Uterus (tissue), 4 donors: ENCODE measurements at regions of chr7 and their contacts with region 1.

Region 1: GRCh38 chr7:130896898-130897514 is 163.0 kb upstream of the KLF14 start:
- DNase-seq: peak; percentile 70 to 83
- H3K4me3 ChIP-seq: no peak overlapping the region
- H3K27ac ChIP-seq: peak overlapping the region; percentile 81 to 86
- H3K4me1 ChIP-seq: peaks cover 0 to 20% of the 10 kb centered on the region in 2 donors
- H3K27me3 ChIP-seq: no peaks in the 10 kb centered on the region
- CTCF ChIP-seq: peak; percentile 78 to 90 (median 82)
- POLR2A ChIP-seq: no peak

Region 2: GRCh38 chr7:130996841-130997231 is 99.8 kb after region 1 on chr7:
- intact Hi-C with region 1: loop called (anchors 10 kb)
- DNase-seq: no peak
- H3K4me3 ChIP-seq: peak overlapping the region in 1 of 2 donors; percentile 10
- H3K27ac ChIP-seq: peak overlapping the region; percentile 70 to 85
- H3K4me1 ChIP-seq: peaks cover 32 to 38% of the 10 kb centered on the region in 2 donors
- H3K27me3 ChIP-seq: no peaks in the 10 kb centered on the region
- CTCF ChIP-seq: no peak
- POLR2A ChIP-seq: peak in 1 of 2 donors; percentile 6

Region 3: GRCh38 chr7:131040467-131040932 is 143.5 kb after region 1 on chr7:
- intact Hi-C with region 1: loop called (anchors 10 kb)
- DNase-seq: peak; percentile 49 to 66
- H3K4me3 ChIP-seq: no peak overlapping the region
- H3K27ac ChIP-seq: peak overlapping the region; percentile 6 to 72
- H3K4me1 ChIP-seq: peaks cover 4 to 12% of the 10 kb centered on the region in 2 donors
- H3K27me3 ChIP-seq: no peaks in the 10 kb centered on the region
- CTCF ChIP-seq: peak; percentile 77 to 90 (median 88)
- POLR2A ChIP-seq: no peak

Region 4: DNA sequence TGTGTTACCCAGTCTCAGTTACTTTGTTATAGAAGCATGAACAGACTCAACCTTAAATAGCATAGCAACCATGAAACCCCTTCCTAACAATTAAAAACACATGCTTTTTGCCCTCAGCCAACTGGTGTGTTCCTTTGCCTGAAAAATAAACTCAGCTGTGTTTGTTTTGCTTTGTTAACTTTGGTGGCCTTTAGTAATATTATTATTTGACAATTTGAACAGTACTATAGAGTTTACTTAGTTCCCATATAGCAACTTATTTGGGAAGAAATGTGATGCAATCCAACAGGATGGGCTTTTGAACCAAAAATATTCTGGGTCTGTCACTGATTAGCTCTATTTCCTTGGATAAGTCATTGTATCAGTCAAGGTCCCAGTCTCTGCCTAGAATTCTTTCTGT is 408.1 kb after region 1 on chr7:
- intact Hi-C with region 1: no loop called
- DNase-seq: no peak
- H3K4me3 ChIP-seq: no peak overlapping the region
- H3K27ac ChIP-seq: no peak overlapping the region
- H3K4me1 ChIP-seq: no peaks in the 10 kb centered on the region
- H3K27me3 ChIP-seq: no peaks in the 10 kb centered on the region
- CTCF ChIP-seq: no peak
- POLR2A ChIP-seq: no peak